Calu3 (cell line): ENCODE measurements at regions of chr3 and their contacts with region 1.

Region 1: DNA sequence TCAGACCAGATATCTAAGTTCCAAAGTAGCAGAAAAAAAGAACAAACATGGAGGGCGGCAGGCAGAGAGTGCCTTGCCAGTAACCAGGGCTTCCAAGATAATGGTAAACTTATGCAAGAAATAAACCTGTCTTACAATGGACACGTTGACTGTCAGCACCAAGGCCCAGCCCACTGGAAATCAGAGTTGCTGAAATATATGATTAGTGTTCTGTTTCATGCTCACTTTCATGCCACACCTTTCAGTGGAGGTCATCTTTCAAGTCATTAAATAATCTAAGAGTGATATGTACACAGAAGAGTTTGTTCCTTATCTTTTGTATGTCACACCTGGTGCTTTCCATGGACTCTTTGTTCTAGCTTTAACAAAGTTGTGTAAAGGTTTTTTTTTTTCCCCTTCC is 358.1 kb downstream of the MECOM start:
- DNase-seq: peak; percentile 60
- H3K4me3 Mint-ChIP-seq: no peak overlapping the region
- H3K27ac Mint-ChIP-seq: peak overlapping the region; percentile 4
- H3K4me1 Mint-ChIP-seq: peaks cover 53% of the 10 kb centered on the region
- H3K27me3 Mint-ChIP-seq: no peaks in the 10 kb centered on the region
- CTCF ChIP-seq: no peak

Region 2: DNA sequence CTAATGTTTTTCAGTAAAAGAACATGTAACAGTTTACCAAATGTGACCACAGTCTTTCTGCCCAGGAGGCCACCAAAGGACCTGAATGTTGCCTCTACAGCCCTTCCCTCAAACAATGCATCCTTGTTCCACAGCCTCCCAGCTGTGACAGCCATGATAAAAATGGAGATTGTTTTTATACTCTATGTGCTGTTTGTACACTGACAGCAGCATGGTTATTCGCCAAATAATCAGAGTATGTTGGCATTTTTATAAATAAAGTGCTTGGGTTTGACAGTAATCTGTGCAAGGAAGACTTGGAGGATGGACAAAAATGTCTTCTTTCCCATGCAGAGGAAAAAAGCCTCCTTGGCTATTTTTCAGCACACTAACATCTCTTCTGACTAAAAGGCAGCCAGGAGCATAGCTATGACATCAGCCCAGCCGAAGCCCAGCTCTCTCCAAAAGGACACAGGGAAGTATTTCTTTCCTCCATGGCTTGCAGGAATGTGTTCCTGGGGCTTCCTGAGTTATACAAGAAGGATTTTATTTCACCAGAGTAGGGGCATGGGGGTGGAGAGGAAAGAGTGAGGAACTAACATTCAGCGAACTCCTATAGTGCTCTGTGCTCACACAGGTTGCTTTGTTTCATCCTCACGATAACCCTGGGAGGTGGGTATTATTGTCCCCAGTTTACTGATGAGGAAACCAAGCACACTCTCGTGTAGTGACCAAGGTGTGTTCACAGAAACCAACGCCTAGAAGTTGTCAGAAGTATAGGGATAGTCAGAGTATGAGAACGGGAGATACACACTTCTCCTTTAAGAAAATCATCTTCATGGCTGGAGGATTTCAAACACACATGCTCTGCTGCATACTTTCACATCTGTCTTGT is 18.4 kb after region 1 on chr3:
- CTCF ChIA-PET with region 1: interaction called, 10 read pairs
- intact Hi-C with region 1: no loop called
- DNase-seq: peak; percentile 47
- H3K4me3 Mint-ChIP-seq: peak overlapping the region; percentile 51
- H3K27ac Mint-ChIP-seq: peak overlapping the region; percentile 33
- H3K4me1 Mint-ChIP-seq: peaks cover 50% of the 10 kb centered on the region
- H3K27me3 Mint-ChIP-seq: no peaks in the 10 kb centered on the region
- CTCF ChIP-seq: no peak

Region 3: DNA sequence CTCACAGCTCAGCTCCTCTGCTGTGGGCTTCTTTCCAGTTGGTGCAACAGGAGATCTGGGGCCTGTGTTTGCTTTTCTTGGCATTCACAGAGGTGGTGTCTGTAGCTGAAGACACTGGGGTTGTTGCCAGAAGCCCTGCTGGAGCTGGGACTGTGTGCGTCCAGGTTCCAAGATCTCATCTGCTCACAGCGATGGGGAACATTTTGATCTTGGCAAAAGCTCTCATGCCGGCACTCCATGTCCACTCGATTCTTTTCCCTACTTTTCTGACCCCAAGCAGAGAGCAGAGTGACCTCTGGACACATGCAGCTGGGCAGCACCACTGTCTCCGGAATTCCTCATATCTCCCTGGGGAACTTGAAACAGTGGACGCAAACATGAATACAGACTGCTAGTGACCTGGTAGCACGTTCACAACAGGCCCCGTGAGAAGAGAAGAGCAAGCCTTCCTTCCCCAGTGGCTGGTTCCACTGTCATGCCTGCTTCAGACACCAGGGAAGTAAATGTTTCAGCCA is 394.1 kb after region 1 on chr3:
- CTCF ChIA-PET with region 1: no interaction called
- intact Hi-C with region 1: no loop called
- DNase-seq: no peak
- H3K4me3 Mint-ChIP-seq: no peak overlapping the region
- H3K27ac Mint-ChIP-seq: no peak overlapping the region
- H3K4me1 Mint-ChIP-seq: no peaks in the 10 kb centered on the region
- H3K27me3 Mint-ChIP-seq: peaks cover 69% of the 10 kb centered on the region
- CTCF ChIP-seq: no peak